MCF 10A (cell line): ENCODE measurements at regions of chrX and their contacts with region 1.

Region 1: GRCh38 chrX:46260513-46260912 is 284.7 kb downstream of the ZNF674 start:
- DNase-seq: peak; percentile 82
- H3K4me3 Mint-ChIP-seq: no peak overlapping the region
- H3K27ac Mint-ChIP-seq: peak overlapping the region; percentile 77
- H3K4me1 Mint-ChIP-seq: peaks cover 16% of the 10 kb centered on the region
- H3K27me3 Mint-ChIP-seq: peaks cover 32% of the 10 kb centered on the region
- CTCF ChIP-seq: no peak

Region 2: GRCh38 chrX:46165411-46165810 is 95.1 kb before region 1 on chrX:
- CTCF ChIA-PET with region 1: no interaction called
- POLR2A ChIA-PET with region 1: no interaction called
- intact Hi-C with region 1: no loop called
- DNase-seq: no peak
- H3K4me3 Mint-ChIP-seq: no peak overlapping the region
- H3K27ac Mint-ChIP-seq: no peak overlapping the region
- H3K4me1 Mint-ChIP-seq: peaks cover 17% of the 10 kb centered on the region
- H3K27me3 Mint-ChIP-seq: peaks cover 41% of the 10 kb centered on the region
- CTCF ChIP-seq: no peak

Region 3: DNA sequence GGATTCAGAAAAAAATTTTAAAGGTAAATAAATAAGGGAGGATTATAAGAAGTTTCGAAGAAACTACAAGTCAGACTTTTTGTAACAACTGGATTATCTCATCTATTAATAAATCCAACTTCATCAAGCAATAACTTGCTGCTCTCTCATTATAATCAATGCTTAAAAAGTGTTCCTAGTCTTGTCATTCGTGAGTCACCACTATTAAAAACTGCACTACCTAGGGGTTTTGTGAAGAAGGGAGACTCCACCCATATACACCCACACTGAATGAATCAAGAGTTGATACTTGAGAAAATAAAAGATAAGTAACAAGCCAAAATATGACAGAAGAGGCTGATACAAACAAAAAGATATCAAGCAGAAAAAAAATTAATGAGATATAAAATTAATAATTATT is 75.8 kb before region 1 on chrX:
- CTCF ChIA-PET with region 1: interaction called, 3 read pairs
- POLR2A ChIA-PET with region 1: interaction called, 14 read pairs
- intact Hi-C with region 1: no loop called
- DNase-seq: no peak
- H3K4me3 Mint-ChIP-seq: no peak overlapping the region
- H3K27ac Mint-ChIP-seq: no peak overlapping the region
- H3K4me1 Mint-ChIP-seq: peaks cover 5% of the 10 kb centered on the region
- H3K27me3 Mint-ChIP-seq: peaks cover 32% of the 10 kb centered on the region
- CTCF ChIP-seq: no peak

Region 4: GRCh38 chrX:46325312-46325877 is 64.9 kb after region 1 on chrX:
- CTCF ChIA-PET with region 1: interaction called, 4 read pairs
- POLR2A ChIA-PET with region 1: interaction called, 14 read pairs
- intact Hi-C with region 1: no loop called
- DNase-seq: peak; percentile 86
- H3K4me3 Mint-ChIP-seq: peak overlapping the region; percentile 71
- H3K27ac Mint-ChIP-seq: peak overlapping the region; percentile 60
- H3K4me1 Mint-ChIP-seq: peaks cover 24% of the 10 kb centered on the region
- H3K27me3 Mint-ChIP-seq: peaks cover 53% of the 10 kb centered on the region
- CTCF ChIP-seq: no peak